Transverse colon (tissue), 4 donors: ENCODE measurements at regions of chr2 and their contacts with region 1.

Region 1: GRCh38 chr2:121095257-121096080 is 189.5 kb downstream of the TFCP2L1 start:
- DNase-seq: peak; percentile 78
- H3K4me3 ChIP-seq: no peak overlapping the region
- H3K27ac ChIP-seq: no peak overlapping the region
- H3K4me1 ChIP-seq: no peaks in the 10 kb centered on the region
- H3K27me3 ChIP-seq: no peaks in the 10 kb centered on the region
- CTCF ChIP-seq: peak; percentile 44 to 88 (median 68)
- EP300 ChIP-seq: no peak
- POLR2A ChIP-seq: no peak

Region 2: DNA sequence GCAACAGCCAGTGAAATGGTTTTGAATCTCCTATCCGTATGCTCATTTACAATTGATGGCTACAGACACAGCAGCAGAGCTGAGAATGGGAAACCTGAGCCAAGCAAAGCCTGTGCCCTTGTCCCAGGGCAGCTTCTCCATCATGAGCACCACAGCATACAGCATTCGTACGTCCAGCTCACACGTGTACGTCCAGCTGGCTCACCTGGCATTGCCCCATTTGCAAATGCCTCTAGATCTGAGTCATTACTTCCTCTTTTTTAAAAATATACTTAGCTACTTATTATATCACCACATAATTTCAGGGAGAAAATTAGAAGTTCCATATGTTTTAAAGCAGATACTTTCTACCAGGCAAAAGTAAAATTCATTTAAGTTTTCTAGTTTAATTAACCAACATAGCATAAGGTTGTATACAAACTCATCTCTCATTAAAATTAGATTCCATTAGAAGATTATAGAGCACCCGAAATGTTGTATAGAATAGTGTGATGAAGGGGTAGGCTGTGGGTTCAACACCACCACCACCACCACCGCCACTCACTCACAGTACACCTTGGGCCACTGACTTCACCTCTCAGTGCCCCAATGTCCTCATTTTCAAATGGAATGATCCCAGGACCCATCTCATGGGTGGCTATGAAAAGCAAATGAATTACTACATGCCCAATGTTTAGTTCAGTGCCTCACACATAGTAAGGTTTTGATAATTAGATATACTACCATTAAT is 1447.9 kb before region 1 on chr2:
- in situ Hi-C with region 1: no loop called
- intact Hi-C with region 1: loop called (anchors 5 kb)
- DNase-seq: peak; percentile 24
- H3K4me3 ChIP-seq: no peak overlapping the region
- H3K27ac ChIP-seq: no peak overlapping the region
- H3K4me1 ChIP-seq: no peaks in the 10 kb centered on the region
- H3K27me3 ChIP-seq: no peaks in the 10 kb centered on the region
- CTCF ChIP-seq: no peak
- EP300 ChIP-seq: no peak
- POLR2A ChIP-seq: no peak

Region 3: DNA sequence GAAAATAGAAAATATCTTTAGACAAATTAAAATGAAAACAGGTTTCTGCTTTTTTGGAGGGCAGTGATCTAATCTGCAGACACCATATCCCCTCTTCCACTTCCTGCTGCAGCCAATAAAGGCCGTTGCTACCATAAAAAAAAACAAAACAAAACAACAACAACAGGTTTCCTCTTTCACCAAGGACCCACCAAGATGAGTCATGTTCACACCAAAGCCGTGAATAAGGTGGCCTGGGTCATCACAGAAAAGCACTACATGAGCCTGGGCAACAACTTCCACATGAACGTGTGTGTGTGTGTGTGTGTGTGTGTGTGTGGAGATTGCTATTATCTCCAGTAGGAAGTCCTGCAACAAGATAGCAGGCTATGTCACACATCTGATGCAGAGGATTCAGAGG is 214.3 kb after region 1 on chr2:
- in situ Hi-C with region 1: loop called in 1 of 4 experiments (anchors 25 kb)
- intact Hi-C with region 1: no loop called
- DNase-seq: no peak
- H3K4me3 ChIP-seq: no peak overlapping the region
- H3K27ac ChIP-seq: no peak overlapping the region
- H3K4me1 ChIP-seq: no peaks in the 10 kb centered on the region
- H3K27me3 ChIP-seq: peaks cover 9% of the 10 kb centered on the region
- CTCF ChIP-seq: no peak
- EP300 ChIP-seq: no peak
- POLR2A ChIP-seq: no peak

Region 4: DNA sequence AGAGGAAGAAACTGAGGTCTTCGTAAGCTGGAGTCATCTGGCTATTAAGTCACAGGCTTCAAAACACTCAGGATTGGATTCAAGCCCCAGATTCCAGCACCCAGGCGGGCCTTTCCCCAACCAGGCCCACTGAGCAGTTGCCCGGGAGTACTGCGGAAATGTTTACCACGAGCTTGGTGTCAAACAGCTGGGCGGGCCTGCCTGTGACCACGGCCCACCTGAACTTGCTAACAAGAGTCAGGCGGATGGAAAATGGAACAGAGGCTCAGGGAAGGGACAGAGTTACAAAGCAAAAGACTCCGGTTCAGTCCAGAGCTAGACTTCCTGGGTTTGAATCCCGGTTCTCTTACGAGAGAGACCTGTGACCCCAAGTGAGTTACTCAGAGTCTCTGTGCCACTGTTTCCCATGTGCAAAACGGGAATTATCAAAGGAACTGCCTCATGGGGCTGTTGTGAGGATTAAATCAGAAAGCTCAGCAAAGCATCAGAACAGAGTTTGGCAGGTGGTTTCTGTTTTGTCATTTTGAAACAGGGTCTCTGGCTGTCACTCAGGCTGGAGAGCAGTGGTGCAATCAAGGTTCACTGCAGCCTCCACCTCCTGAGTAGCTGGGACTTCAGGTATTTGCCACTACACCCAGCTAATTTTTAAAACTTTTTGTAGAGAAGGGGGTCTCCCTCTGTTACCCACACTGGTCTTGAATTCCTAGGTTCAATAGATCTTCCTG is 238.5 kb after region 1 on chr2:
- in situ Hi-C with region 1: no loop called
- intact Hi-C with region 1: no loop called
- DNase-seq: no peak
- H3K4me3 ChIP-seq: no peak overlapping the region
- H3K27ac ChIP-seq: no peak overlapping the region
- H3K4me1 ChIP-seq: peaks cover 0 to 11% (median 2%) of the 10 kb centered on the region in 4 donors
- H3K27me3 ChIP-seq: no peaks in the 10 kb centered on the region
- CTCF ChIP-seq: no peak
- EP300 ChIP-seq: no peak
- POLR2A ChIP-seq: no peak

Region 5: GRCh38 chr2:121356058-121356640 is 260.7 kb after region 1 on chr2:
- in situ Hi-C with region 1: loop called in 2 of 4 experiments (anchors 10 to 25 kb)
- intact Hi-C with region 1: no loop called
- DNase-seq: peak; percentile 59
- H3K4me3 ChIP-seq: no peak overlapping the region
- H3K27ac ChIP-seq: peak overlapping the region in 3 of 4 donors; percentile 70 to 75 (median 73)
- H3K4me1 ChIP-seq: peaks cover 3 to 26% (median 13%) of the 10 kb centered on the region in 4 donors
- H3K27me3 ChIP-seq: no peaks in the 10 kb centered on the region
- CTCF ChIP-seq: peak; percentile 56 to 71 (median 69)
- EP300 ChIP-seq: no peak
- POLR2A ChIP-seq: no peak